Naive thymus-derived CD8-positive, alpha-beta T cell (primary cell): ENCODE measurements at regions of chr14 and their contacts with region 1.

Region 1: DNA sequence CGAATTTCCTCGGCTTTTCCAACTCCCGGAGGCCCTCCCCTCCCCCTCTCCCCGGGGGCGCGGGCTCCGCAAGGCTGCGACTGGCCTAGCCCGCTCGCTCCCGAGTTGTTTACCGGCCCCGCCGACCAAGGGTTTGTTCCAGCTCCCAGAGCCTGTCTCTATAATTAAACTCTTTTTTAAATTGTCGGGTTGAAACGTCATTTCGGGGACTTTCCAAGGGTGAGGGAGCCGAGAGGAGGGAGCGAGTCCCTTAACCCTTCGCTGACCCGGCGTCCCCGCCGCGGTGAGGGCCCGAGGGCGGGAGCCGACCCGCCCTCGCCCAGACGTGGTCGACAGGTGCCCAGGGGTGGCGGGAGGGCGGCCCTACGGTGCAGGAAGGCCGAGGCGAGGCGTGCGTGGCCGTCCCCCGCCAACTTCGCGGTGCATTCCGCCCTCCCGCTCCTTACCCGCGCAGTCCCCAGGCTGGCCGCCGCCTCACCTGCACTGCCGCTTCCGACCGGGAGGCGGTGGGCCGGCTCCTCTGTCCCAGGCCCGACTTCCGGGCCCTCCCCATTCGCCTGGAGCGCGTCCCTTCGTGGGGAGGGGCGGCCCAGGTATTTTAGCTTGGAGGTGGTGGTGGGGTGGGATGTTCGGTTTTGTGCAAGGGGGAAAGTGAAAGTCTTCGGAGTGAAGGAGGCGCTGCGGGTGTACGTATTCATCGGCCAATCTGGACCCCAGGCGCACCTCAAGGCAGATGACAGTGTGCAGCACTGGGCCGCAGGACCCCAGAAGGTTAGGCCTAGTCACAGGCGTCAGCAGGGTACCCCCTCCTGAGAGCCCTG is 2.9 kb upstream of the ZFP36L1 start:
- DNase-seq: peak; percentile 73 to 91 (median 82)
- ATAC-seq: peak; percentile 39 to 56
- H3K4me3 Mint-ChIP-seq: peak overlapping the region; percentile 86 to 100 (median 92)
- H3K27ac Mint-ChIP-seq: peak overlapping the region; percentile 94 to 100 (median 99)
- H3K4me1 Mint-ChIP-seq: peaks cover 8 to 45% (median 34%) of the 10 kb centered on the region in 4 donors
- H3K27me3 Mint-ChIP-seq: peaks cover 0 to 2% (median 0%) of the 10 kb centered on the region in 5 donors

Region 2: DNA sequence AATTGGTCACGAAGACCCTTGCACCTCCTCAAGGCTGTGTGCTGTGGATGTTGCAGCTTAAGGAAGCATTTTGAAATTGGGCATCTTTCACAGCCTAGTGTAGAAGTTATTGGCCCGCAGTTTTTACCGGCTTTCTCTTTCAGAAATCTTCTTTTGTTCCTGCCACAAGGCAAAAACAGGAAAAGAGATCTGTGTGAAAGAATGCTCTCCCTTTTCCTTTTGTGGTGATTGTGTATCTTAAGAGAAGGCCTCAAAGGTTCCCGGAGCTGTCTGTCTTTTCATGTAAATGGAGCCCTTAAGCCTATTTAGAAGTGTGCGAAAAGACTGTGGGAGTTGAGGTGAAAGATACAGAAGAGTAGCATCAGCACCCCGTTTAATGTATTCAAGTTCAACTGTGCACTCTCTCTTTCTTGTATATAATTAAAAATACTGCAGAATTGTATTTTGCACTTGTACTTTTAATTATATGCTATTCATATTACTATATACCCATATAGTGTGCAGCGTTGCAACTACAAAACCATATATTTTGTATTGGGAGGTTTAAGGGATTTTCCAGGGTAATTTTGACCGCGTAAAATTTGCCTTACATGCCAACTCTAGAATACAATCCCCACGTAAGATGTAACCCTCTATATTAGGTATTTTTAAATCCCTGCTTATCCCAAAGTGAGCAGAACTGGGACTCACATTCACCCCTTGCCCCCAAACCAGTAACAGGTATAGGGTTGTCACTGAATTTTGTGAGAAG is 534.5 kb before region 1 on chr14:
- POLR2A ChIA-PET with region 1: interaction called, 150 read pairs
- DNase-seq: peak in 2 of 10 donors; percentile 21 to 25
- ATAC-seq: peak; percentile 52 to 79
- H3K4me3 Mint-ChIP-seq: peak overlapping the region; percentile 22 to 81 (median 65)
- H3K27ac Mint-ChIP-seq: peak overlapping the region; percentile 62 to 95 (median 92)
- H3K4me1 Mint-ChIP-seq: peaks cover 39 to 73% (median 62%) of the 10 kb centered on the region in 4 donors
- H3K27me3 Mint-ChIP-seq: no peaks in the 10 kb centered on the region

Region 3: GRCh38 chr14:68377459-68377858 is 418.3 kb before region 1 on chr14:
- POLR2A ChIA-PET with region 1: interaction called, 56 read pairs
- DNase-seq: no peak
- ATAC-seq: peak in 1 of 2 donors; percentile 31
- H3K4me3 Mint-ChIP-seq: peak overlapping the region in 9 of 10 donors; percentile 20 to 71 (median 63)
- H3K27ac Mint-ChIP-seq: peak overlapping the region; percentile 61 to 92 (median 85)
- H3K4me1 Mint-ChIP-seq: peaks cover 46 to 77% (median 67%) of the 10 kb centered on the region in 4 donors
- H3K27me3 Mint-ChIP-seq: no peaks in the 10 kb centered on the region

Region 4: DNA sequence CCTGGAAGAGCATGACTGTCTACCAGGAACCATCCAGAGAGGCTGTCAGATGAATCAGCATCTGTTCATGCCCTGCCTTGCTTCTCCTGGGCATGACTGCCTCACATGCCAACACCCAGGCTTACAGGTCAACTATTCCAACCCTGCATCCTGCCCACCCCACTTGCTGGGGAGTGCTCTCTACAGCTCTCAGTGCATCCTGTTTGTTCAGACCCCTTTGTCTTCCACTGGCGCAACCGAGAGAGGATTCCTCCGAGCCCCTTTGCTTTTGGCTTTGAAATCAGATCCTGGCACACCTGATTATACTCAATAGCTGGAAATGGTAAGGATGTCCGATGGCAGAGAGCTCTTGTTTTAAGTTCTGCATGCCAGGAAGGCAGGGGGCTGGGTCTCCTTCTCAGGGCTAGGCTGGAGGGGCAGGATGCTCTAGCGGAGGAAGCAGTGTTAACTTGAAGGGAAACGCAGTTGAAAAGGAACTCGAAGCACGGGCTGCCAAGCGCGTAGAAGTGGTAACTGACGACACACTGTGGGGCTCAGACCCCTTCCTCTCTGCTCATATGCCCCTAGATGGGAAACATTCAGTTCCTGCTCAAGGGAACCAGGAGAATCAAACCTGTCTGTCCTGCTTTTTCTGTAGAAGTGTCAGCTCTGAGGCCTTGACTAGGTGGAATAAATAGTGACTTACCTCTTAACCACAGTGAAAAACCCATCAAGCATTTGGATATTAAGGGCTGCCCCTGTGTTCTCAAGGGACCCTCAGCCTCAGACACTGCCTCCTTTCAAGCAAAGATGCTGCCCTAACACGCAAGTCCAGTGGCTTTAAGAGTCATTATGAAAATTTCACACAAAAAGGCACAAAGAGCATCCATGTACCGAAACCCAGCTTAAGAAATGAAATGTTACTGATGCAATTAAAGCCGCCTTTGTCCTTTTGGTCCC is 300.4 kb before region 1 on chr14:
- POLR2A ChIA-PET with region 1: interaction called, 15 read pairs
- DNase-seq: peak in 6 of 10 donors; percentile 24 to 69 (median 54)
- ATAC-seq: peak; percentile 86 to 95
- H3K4me3 Mint-ChIP-seq: peak overlapping the region; percentile 16 to 80 (median 69)
- H3K27ac Mint-ChIP-seq: peak overlapping the region; percentile 81 to 96 (median 88)
- H3K4me1 Mint-ChIP-seq: peaks cover 44 to 74% (median 65%) of the 10 kb centered on the region in 4 donors
- H3K27me3 Mint-ChIP-seq: no peaks in the 10 kb centered on the region

Region 5: GRCh38 chr14:68685419-68686204 is 110.2 kb before region 1 on chr14:
- POLR2A ChIA-PET with region 1: interaction called, 94 read pairs
- DNase-seq: peak; percentile 39 to 93 (median 80)
- ATAC-seq: peak; percentile 86 to 88
- H3K4me3 Mint-ChIP-seq: peak overlapping the region in 9 of 10 donors; percentile 32 to 77 (median 72)
- H3K27ac Mint-ChIP-seq: peak overlapping the region; percentile 93 to 98 (median 96)
- H3K4me1 Mint-ChIP-seq: peaks cover 36 to 82% (median 70%) of the 10 kb centered on the region in 4 donors
- H3K27me3 Mint-ChIP-seq: no peaks in the 10 kb centered on the region

Region 6: DNA sequence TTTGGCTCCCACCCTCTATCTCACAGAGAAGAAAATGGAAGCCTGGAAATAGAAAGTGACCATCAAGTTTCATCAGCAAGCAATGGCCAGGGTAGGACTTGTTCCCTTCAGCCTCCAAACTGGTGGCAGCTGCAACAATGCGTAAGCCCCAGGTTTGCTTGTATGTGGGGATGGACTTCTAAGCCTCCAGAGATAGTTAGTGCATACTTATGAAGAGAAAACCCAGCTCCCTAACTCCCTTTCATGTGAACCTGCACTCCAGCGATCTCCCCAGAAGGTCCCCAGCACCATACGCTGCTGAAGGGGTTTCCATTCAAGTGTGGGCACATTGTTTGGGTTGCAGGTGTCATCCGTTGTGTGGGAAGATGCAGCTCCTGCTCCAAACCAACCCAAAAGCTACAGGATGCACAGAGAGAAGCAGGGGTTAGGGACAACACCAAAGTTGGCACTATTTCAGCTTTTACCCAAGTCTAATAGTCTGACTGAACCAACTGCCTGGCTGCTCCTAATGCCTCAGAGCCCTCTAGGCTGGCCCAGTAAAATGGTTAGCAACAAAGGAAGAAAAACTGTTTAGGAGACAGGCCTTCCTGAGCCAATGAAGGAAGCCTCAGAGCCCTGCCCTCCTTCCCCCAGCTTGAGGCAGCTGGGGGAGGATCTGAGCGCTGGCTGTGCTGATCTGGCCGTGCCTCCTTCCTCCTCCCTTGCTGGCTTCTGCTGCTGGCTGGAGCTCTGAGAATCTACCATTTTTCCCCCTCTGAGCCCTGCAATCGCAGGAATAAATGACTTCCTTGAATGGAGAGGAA is 15.2 kb before region 1 on chr14:
- POLR2A ChIA-PET with region 1: interaction called, 1,375 read pairs
- DNase-seq: peak in 4 of 10 donors; percentile 31 to 47 (median 34)
- ATAC-seq: peak; percentile 16 to 17
- H3K4me3 Mint-ChIP-seq: peak overlapping the region; percentile 75 to 89 (median 84)
- H3K27ac Mint-ChIP-seq: peak overlapping the region; percentile 85 to 99 (median 93)
- H3K4me1 Mint-ChIP-seq: peaks cover 39 to 87% (median 80%) of the 10 kb centered on the region in 4 donors
- H3K27me3 Mint-ChIP-seq: no peaks in the 10 kb centered on the region

Region 7: GRCh38 chr14:68843471-68844209 is 47.8 kb after region 1 on chr14:
- POLR2A ChIA-PET with region 1: no interaction called
- DNase-seq: peak; percentile 52 to 85 (median 71)
- ATAC-seq: peak; percentile 83 to 94
- H3K4me3 Mint-ChIP-seq: peak overlapping the region in 8 of 10 donors; percentile 5 to 66 (median 54)
- H3K27ac Mint-ChIP-seq: peak overlapping the region in 2 of 10 donors; percentile 45 to 72
- H3K4me1 Mint-ChIP-seq: peaks cover 15 to 26% (median 21%) of the 10 kb centered on the region in 4 donors
- H3K27me3 Mint-ChIP-seq: no peaks in the 10 kb centered on the region